Panc1 (cell line): ENCODE measurements at regions of chr11 and their contacts with region 1.

Region 1: GRCh38 chr11:23112987-23113886 is 253.0 kb upstream of the CCDC179 start:
- DNase-seq: peak; percentile 7
- ATAC-seq: peak; percentile 58; the same call in 1 of the 2 replicates
- H3K4me3 ChIP-seq: no peak overlapping the region
- H3K27ac ChIP-seq: no peak overlapping the region
- H3K4me1 ChIP-seq: no peaks in the 10 kb centered on the region
- H3K27me3 ChIP-seq: no peaks in the 10 kb centered on the region
- CTCF ChIP-seq: peak; percentile 74

Region 2: GRCh38 chr11:23540101-23540561 is 426.9 kb after region 1 on chr11:
- CTCF ChIA-PET with region 1: no interaction called
- POLR2A ChIA-PET with region 1: no interaction called
- in situ Hi-C with region 1: no loop called
- intact Hi-C with region 1: loop called (anchors 10 kb)
- DNase-seq: peak; percentile 32
- ATAC-seq: peak; percentile 80
- H3K4me3 ChIP-seq: no peak overlapping the region
- H3K27ac ChIP-seq: no peak overlapping the region
- H3K4me1 ChIP-seq: no peaks in the 10 kb centered on the region
- H3K27me3 ChIP-seq: no peaks in the 10 kb centered on the region
- CTCF ChIP-seq: peak; percentile 76

Region 3: GRCh38 chr11:23865341-23865975 is 752.2 kb after region 1 on chr11:
- CTCF ChIA-PET with region 1: no interaction called
- POLR2A ChIA-PET with region 1: interaction called, 22 read pairs
- in situ Hi-C with region 1: no loop called
- intact Hi-C with region 1: no loop called
- DNase-seq: no peak
- ATAC-seq: no peak
- H3K4me3 ChIP-seq: no peak overlapping the region
- H3K27ac ChIP-seq: no peak overlapping the region
- H3K4me1 ChIP-seq: no peaks in the 10 kb centered on the region
- H3K27me3 ChIP-seq: no peaks in the 10 kb centered on the region
- CTCF ChIP-seq: no peak